ENCODE measurements at regions of chr1 and their contacts with region 1.

Region 1: GRCh38 chr1:37989361-37989930 is 376 bp downstream of the SF3A3 start:
- DNase-seq: peak; percentile 59
- ATAC-seq: peak; percentile 60
- H3K4me3 Mint-ChIP-seq: peak overlapping the region; percentile 95
- H3K27ac Mint-ChIP-seq: peak overlapping the region; percentile 90
- H3K4me1 Mint-ChIP-seq: peaks cover 26% of the 10 kb centered on the region
- H3K27me3 Mint-ChIP-seq: no peaks in the 10 kb centered on the region

Region 2: DNA sequence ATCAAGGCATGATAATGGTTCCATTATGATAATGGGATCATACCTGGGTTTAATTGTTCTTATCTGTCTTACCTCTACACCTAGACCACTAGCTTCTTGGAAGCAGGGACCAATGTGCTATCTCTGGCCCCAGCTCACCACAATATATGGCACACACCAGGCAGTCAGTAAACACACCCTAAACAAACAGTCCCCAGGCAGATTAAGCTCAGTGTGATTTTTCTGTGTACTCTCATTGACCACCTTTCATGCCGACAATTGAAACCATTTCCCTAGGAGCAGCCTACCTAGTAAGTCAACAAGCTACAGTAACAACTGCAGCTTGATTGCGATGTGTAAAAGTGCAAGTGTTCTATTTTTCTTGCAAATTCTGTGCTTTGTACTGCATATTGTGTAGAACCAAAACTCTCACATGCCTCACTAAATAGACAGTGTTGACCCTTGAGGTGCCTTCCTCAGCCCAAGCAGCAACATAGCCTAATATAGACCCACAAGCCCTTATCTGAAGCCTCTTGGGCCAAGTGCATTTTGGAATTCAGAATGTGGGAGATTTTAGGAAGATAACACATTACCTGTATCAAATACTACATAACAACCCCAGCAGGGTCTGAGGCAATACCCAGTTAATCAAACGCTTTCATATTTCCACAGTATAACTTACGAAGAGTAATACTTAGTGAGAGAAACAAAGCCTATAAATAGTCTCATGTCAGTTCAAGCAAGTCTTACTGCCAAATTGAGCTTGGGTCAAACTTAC is 74.5 kb before region 1 on chr1:
- CTCF ChIA-PET with region 1: no interaction called
- POLR2A ChIA-PET with region 1: no interaction called
- DNase-seq: no peak
- ATAC-seq: no peak
- H3K4me3 Mint-ChIP-seq: no peak overlapping the region
- H3K27ac Mint-ChIP-seq: no peak overlapping the region
- H3K4me1 Mint-ChIP-seq: peaks cover 11% of the 10 kb centered on the region
- H3K27me3 Mint-ChIP-seq: no peaks in the 10 kb centered on the region

Region 3: GRCh38 chr1:37931361-37932158 is 57.9 kb before region 1 on chr1:
- CTCF ChIA-PET with region 1: interaction called, 14 read pairs
- POLR2A ChIA-PET with region 1: interaction called, 3 read pairs
- DNase-seq: peak; percentile 98
- ATAC-seq: peak; percentile 97
- H3K4me3 Mint-ChIP-seq: peak overlapping the region; percentile 91
- H3K27ac Mint-ChIP-seq: peak overlapping the region; percentile 78
- H3K4me1 Mint-ChIP-seq: peaks cover 42% of the 10 kb centered on the region
- H3K27me3 Mint-ChIP-seq: no peaks in the 10 kb centered on the region

Region 4: DNA sequence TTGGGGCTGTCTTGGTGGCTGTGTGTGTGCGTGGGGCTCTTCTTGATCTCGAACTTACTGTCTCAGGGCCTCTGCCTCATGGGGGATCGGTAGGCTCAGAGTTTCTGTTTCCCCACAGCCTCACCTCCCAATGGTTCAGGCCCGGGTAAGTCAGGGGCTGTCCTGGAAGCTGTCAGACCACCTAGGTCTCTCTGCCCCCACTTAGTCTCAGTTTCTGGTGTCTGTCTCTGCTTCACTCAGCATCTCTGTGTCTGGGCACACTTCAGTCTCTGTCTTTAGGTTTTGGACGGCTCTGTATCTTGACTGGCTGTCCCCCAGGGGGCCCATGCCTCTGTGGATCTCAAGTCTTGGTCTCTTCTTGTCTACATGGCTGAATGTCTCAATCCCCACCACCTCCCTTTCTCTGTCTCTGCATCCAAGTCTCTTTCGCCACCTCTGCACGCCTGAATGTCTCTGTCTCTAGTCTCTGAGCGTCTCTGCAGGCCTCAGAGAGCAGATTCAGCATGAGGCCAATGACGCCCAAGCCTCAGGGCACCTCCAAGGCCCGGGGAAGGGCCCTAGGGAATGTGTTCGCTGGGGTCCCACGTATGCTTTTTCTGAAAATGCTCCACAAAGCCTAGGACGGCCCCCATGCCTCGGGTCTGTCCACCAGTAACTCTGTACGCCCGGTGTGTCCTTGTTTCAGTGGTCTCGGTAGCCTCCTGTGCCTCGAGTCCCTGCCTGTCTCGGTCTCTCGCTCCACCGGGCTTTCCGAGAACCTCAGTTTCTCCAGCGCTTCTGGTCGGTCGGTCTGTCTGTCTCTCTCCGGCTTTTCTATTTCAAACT is 15.1 kb after region 1 on chr1:
- CTCF ChIA-PET with region 1: interaction called, 215 read pairs
- POLR2A ChIA-PET with region 1: interaction called, 24 read pairs
- DNase-seq: peak; percentile 52
- ATAC-seq: peak; percentile 47
- H3K4me3 Mint-ChIP-seq: peak overlapping the region; percentile 81
- H3K27ac Mint-ChIP-seq: peak overlapping the region; percentile 74
- H3K4me1 Mint-ChIP-seq: peaks cover 56% of the 10 kb centered on the region
- H3K27me3 Mint-ChIP-seq: no peaks in the 10 kb centered on the region

Region 5: GRCh38 chr1:38012363-38013226 is 23.1 kb after region 1 on chr1 and contains the start of gene UTP11:
- CTCF ChIA-PET with region 1: interaction called, 215 read pairs
- POLR2A ChIA-PET with region 1: interaction called, 24 read pairs
- DNase-seq: peak; percentile 96
- ATAC-seq: peak; percentile 92
- H3K4me3 Mint-ChIP-seq: peak within 1 kb of the TSS; percentile 98
- H3K27ac Mint-ChIP-seq: peak within 1 kb of the TSS; percentile 97
- H3K4me1 Mint-ChIP-seq: peaks cover 55% of the 10 kb centered on the region
- H3K27me3 Mint-ChIP-seq: no peaks in the 10 kb centered on the region
- total RNA-seq, gene UTP11: 39.0 to 39.5 TPM